CD4-positive, alpha-beta T cell (primary cell): ENCODE measurements at regions of chr10 and their contacts with region 1.

Region 1: GRCh38 chr10:10919976-10920375 is 97.7 kb upstream of the CELF2 start:
- DNase-seq: no peak
- ATAC-seq: no peak
- H3K4me3 ChIP-seq: no peak overlapping the region
- H3K4me3 Mint-ChIP-seq: no peak overlapping the region
- H3K27ac ChIP-seq: no peak overlapping the region
- H3K27ac Mint-ChIP-seq: no peak overlapping the region
- H3K4me1 ChIP-seq: no peaks in the 10 kb centered on the region
- H3K4me1 Mint-ChIP-seq: no peaks in the 10 kb centered on the region
- H3K27me3 ChIP-seq: peaks cover 0 to 2% of the 10 kb centered on the region in 2 experiments
- H3K27me3 Mint-ChIP-seq: peaks cover 9% of the 10 kb centered on the region
- CTCF ChIP-seq: no peak

Region 2: GRCh38 chr10:11454958-11455566 is 535.1 kb after region 1 on chr10:
- CTCF ChIA-PET with region 1: no interaction called
- POLR2A ChIA-PET with region 1: no interaction called
- intact Hi-C with region 1: loop called in 1 of 2 experiments (anchors 10 kb)
- DNase-seq: no peak
- ATAC-seq: no peak
- H3K4me3 ChIP-seq: no peak overlapping the region
- H3K4me3 Mint-ChIP-seq: no peak overlapping the region
- H3K27ac ChIP-seq: no peak overlapping the region
- H3K27ac Mint-ChIP-seq: no peak overlapping the region
- H3K4me1 ChIP-seq: no peaks in the 10 kb centered on the region
- H3K4me1 Mint-ChIP-seq: peaks cover 5% of the 10 kb centered on the region
- H3K27me3 ChIP-seq: no peaks in the 10 kb centered on the region
- H3K27me3 Mint-ChIP-seq: no peaks in the 10 kb centered on the region
- CTCF ChIP-seq: no peak